T-cell (primary cell): ENCODE measurements at regions of chr11 and their contacts with region 1.

Region 1: DNA sequence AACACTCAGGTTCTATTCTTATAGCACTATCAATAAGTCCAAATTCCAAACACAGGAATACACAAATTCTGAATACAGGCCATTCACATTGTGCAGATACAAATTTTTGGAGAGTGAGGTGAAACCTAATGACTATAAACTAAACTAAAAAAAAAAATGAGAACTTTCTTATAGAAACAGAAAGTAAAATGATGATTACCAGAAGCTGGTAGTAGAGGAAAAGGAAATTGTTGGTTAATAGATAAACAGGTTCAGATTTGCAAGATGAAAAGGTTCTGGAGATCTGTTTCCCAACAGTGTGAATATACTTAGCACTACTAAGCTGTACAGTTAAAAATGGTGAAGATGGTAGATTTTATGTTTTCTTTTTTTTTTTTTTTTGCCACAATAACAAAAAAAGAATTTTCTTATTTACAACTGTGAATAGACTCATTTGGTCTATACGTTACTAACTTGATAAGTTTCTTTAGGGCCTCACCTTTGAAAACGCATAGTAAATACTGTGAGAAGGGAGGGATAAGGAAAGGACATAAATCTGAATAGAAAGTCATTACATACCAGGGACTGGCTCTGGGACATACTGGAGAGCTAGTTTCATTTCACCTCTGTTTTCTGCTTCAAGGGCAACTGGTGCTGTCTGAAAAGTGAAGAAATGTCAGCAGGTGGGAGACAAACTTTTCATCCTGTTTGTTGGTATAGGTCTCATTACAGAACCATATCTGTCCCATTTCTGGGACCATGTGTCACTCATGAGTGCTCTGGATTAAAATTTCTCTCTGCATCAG is 14.2 kb upstream of the CCDC89 start:
- DNase-seq: peak in 1 of 35 experiments; percentile 32
- ATAC-seq: peak in 3 of 4 experiments; percentile 41 to 84 (median 48)
- H3K4me3 ChIP-seq: no peak overlapping the region
- H3K4me3 Mint-ChIP-seq: peak overlapping the region; percentile 35 to 52 (median 48)
- H3K27ac ChIP-seq: peak overlapping the region; percentile 56
- H3K27ac Mint-ChIP-seq: peak overlapping the region; percentile 50 to 82
- H3K4me1 ChIP-seq: peaks cover 4 to 10% of the 10 kb centered on the region in 2 experiments
- H3K4me1 Mint-ChIP-seq: peaks cover 22 to 33% (median 33%) of the 10 kb centered on the region in 3 donors
- H3K27me3 ChIP-seq: no peaks in the 10 kb centered on the region
- H3K27me3 Mint-ChIP-seq: no peaks in the 10 kb centered on the region

Region 2: DNA sequence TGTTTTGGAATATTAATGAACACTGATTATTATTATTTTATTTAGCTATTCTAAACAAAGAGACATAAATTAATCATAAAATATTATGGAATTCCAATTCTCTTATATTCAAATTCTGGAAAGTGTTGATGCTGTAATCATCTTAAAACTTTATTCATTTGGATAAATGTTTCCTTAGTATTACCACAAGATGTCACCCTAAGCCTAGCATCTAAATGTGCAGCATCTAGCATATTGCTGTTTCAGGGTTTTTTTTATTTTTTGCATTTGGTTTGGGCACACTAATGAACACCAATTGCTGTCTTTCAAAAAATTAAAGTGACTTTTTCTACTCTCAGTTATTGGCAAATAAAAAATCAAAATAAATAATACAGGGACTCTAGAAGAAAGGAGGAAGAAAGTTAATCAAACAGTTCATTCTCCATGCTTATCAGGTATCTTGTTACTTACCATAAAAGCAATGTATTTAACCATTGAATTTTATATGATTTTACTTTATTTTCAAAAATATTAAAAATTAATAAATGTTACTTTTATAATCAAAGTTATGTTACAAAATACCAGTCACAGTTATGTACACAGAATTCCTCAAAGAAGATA is 104.8 kb before region 1 on chr11:
- CTCF ChIA-PET with region 1: no interaction called
- POLR2A ChIA-PET with region 1: no interaction called
- DNase-seq: peak in 1 of 35 experiments; percentile 74
- ATAC-seq: peak in 3 of 4 experiments; percentile 30 to 59 (median 52)
- H3K4me3 ChIP-seq: no peak overlapping the region
- H3K4me3 Mint-ChIP-seq: no peak overlapping the region
- H3K27ac ChIP-seq: no peak overlapping the region
- H3K27ac Mint-ChIP-seq: no peak overlapping the region
- H3K4me1 ChIP-seq: no peaks in the 10 kb centered on the region
- H3K4me1 Mint-ChIP-seq: no peaks in the 10 kb centered on the region
- H3K27me3 ChIP-seq: peaks cover 0 to 2% of the 10 kb centered on the region in 2 experiments
- H3K27me3 Mint-ChIP-seq: peaks cover 3 to 5% of the 10 kb centered on the region in 2 donors

Region 3: DNA sequence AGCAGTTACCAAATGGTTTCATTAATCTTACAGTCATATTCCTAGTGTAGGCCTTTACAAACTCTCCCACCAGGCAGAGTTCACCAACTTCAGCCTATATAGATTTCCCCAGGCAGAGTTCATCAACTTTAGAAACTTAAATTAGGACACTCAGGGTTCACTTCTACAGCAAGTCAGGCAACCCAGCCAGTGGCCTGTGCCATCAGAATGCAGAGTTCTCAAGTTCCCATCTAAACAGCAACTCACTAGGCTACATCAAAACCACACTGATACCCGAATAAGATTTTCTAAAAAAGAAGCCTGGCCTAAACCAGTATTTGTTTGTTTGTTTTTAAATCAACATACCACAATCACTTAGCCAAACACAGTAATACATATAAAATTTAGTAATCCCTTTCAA is 335.0 kb after region 1 on chr11:
- CTCF ChIA-PET with region 1: no interaction called
- POLR2A ChIA-PET with region 1: interaction called in 1 of 2 experiments, 10 read pairs
- DNase-seq: no peak
- ATAC-seq: no peak
- H3K4me3 ChIP-seq: no peak overlapping the region
- H3K4me3 Mint-ChIP-seq: no peak overlapping the region
- H3K27ac ChIP-seq: no peak overlapping the region
- H3K27ac Mint-ChIP-seq: no peak overlapping the region
- H3K4me1 ChIP-seq: peaks cover 6 to 8% of the 10 kb centered on the region in 2 experiments
- H3K4me1 Mint-ChIP-seq: peaks cover 58 to 69% (median 62%) of the 10 kb centered on the region in 3 donors
- H3K27me3 ChIP-seq: no peaks in the 10 kb centered on the region
- H3K27me3 Mint-ChIP-seq: no peaks in the 10 kb centered on the region